Activated T-helper 2 cell treated with anti-CD3 and anti-CD28 coated beads, Interferon-gamma antibody, Interleukin-2, Interleukin-4, amounts not matched to agents 10 μg/mL and 5 μg/mL and 100 μg/mL, durations not matched to agents 14 hours and 24 hours and 36 hours (primary cell): ENCODE measurements at regions of chr7 and their contacts with region 1.

Region 1: DNA sequence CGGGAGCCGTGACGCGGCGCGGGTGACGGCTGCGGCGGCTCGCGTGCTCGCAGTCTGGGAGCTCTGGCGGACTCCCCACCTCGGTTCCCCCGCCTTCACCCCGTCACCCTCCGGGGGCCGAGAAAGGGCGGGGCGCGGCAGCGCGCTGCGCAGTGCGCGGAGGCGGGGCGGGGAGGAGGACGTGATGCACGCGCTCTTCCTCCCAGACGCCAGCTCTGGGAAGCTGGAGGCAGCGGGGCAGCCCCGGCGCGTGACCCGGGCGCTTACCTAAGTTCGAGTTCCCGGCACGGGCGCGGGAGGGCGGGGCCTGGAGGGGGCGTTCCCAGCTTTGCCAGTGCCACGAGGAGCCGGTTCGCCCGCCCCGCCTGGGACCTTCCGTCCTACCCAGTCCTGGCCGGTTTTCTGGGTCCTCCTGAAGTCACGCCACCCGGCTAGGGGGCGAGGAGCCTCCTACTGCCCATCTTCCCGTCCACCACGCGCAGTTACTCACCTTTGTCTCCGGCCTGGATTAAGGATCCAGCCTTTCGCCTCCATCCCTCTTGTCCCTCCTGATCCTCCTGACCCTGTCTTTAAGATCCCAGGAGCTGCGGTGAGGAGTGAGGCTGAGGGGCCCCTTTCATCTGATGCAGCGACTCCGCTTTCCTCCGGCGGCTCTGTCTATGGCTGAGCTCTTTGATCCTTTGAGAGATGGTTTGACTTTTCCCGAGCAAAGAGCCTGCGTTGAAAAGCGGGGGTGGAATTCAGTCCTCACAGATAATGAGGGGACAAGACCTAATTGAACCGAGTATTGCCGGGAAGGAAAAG is 470 bp upstream of the NAMPT start:
- DNase-seq: peak; percentile 95
- H3K4me3 Mint-ChIP-seq: peak overlapping the region; percentile 95
- H3K27ac Mint-ChIP-seq: peak overlapping the region; percentile 99
- H3K4me1 Mint-ChIP-seq: peaks cover 40% of the 10 kb centered on the region
- H3K27me3 Mint-ChIP-seq: no peaks in the 10 kb centered on the region

Region 2: GRCh38 chr7:105013221-105013815 is 1271.9 kb before region 1 on chr7:
- intact Hi-C with region 1: loop called (anchors 2 kb)
- DNase-seq: peak; percentile 92
- H3K4me3 Mint-ChIP-seq: peak overlapping the region; percentile 91
- H3K27ac Mint-ChIP-seq: peak overlapping the region; percentile 100
- H3K4me1 Mint-ChIP-seq: peaks cover 35% of the 10 kb centered on the region
- H3K27me3 Mint-ChIP-seq: no peaks in the 10 kb centered on the region

Region 3: DNA sequence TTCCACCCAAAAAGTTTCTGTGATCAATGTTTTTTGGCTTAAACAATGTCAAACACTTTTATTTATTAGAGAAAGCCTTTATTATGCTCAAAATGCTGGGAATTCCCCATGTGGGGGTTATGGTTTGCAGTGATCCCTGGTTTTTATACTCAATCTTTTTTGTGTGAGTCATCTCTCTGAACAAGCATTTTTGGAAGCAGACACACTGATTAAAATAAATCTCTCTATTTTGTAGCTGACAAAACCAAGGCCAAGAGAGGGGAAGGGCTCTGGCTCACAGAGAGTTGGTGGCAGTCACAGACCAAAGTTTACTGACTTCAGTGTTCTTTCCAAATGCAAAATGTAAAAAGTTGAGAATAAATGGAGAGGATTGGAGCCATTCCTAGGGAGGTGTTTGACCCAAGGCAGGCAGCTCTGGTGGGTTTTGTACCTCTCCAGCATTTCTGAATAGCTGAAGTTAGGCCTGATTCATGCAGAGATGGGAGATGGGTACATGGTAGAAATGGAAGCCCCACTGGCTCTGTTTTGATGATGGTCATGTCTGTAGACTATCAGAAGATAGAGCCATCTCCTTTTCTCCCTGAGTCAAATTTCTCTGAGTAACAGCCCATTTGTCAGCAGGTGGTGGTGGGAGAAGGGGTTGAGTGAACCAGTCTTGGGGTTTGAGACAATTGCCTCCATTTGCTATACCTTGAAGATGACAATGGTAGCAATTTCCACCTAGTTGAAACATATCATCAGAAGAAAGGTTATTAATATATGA is 44.9 kb after region 1 on chr7:
- intact Hi-C with region 1: loop called (anchors 5 kb)
- DNase-seq: no peak
- H3K4me3 Mint-ChIP-seq: no peak overlapping the region
- H3K27ac Mint-ChIP-seq: peak overlapping the region; percentile 59
- H3K4me1 Mint-ChIP-seq: peaks cover 21% of the 10 kb centered on the region
- H3K27me3 Mint-ChIP-seq: no peaks in the 10 kb centered on the region

Region 4: GRCh38 chr7:106405697-106406141 is 120.5 kb after region 1 on chr7:
- intact Hi-C with region 1: loop called (anchors 1 kb)
- DNase-seq: no peak
- H3K4me3 Mint-ChIP-seq: no peak overlapping the region
- H3K27ac Mint-ChIP-seq: peak overlapping the region; percentile 67
- H3K4me1 Mint-ChIP-seq: peaks cover 28% of the 10 kb centered on the region
- H3K27me3 Mint-ChIP-seq: peaks cover 4% of the 10 kb centered on the region

Region 5: GRCh38 chr7:106485031-106485551 is 199.8 kb after region 1 on chr7:
- intact Hi-C with region 1: loop called (anchors 1 kb)
- DNase-seq: no peak
- H3K4me3 Mint-ChIP-seq: no peak overlapping the region
- H3K27ac Mint-ChIP-seq: peak overlapping the region; percentile 69
- H3K4me1 Mint-ChIP-seq: peaks cover 53% of the 10 kb centered on the region
- H3K27me3 Mint-ChIP-seq: no peaks in the 10 kb centered on the region

Region 6: DNA sequence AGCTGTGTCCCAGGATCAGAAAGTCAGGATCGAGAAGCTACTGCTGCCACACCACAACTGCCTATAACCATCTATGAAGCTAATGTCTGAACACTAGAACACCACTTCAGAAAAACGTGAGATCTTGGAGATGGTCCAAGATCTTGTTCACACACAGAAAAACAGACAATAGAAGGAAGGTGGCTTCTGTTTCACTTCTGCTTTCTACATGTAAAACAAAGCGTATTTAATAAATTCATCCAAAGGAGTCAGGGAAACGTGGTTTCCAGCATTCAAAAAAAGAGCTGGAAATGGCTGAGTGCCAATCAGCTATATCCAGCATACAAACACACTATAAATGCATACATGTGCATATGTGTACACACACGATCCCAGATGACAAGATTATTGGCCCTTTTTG is 445.9 kb after region 1 on chr7:
- intact Hi-C with region 1: loop called (anchors 5 kb)
- DNase-seq: no peak
- H3K4me3 Mint-ChIP-seq: no peak overlapping the region
- H3K27ac Mint-ChIP-seq: no peak overlapping the region
- H3K4me1 Mint-ChIP-seq: peaks cover 49% of the 10 kb centered on the region
- H3K27me3 Mint-ChIP-seq: no peaks in the 10 kb centered on the region

Region 7: GRCh38 chr7:107168233-107169119 is 883.2 kb after region 1 on chr7 and contains the start of gene HBP1:
- intact Hi-C with region 1: loop called (anchors 2 kb)
- DNase-seq: peak; percentile 98
- H3K4me3 Mint-ChIP-seq: peak within 1 kb of the TSS; percentile 89
- H3K27ac Mint-ChIP-seq: peak within 1 kb of the TSS; percentile 96
- H3K4me1 Mint-ChIP-seq: peaks cover 36% of the 10 kb centered on the region
- H3K27me3 Mint-ChIP-seq: peaks cover 15% of the 10 kb centered on the region
- total RNA-seq, gene HBP1: 17.0 and 19.3 TPM in 2 replicates